ENCODE measurements at regions of chr2 and their contacts with region 1.

Region 1: GRCh38 chr2:20962939-20963557 is 80.8 kb downstream of the APOB start:
- DNase-seq: peak; percentile 49
- ATAC-seq: peak; percentile 73
- H3K4me3 Mint-ChIP-seq: no peak overlapping the region
- H3K27ac Mint-ChIP-seq: no peak overlapping the region
- H3K4me1 Mint-ChIP-seq: no peaks in the 10 kb centered on the region
- H3K27me3 Mint-ChIP-seq: peaks cover 19% of the 10 kb centered on the region
- CTCF ChIP-seq: peak; percentile 82

Region 2: GRCh38 chr2:19649785-19650380 is 1313.2 kb before region 1 on chr2:
- CTCF ChIA-PET with region 1: no interaction called
- POLR2A ChIA-PET with region 1: no interaction called
- intact Hi-C with region 1: no loop called
- DNase-seq: no peak
- ATAC-seq: no peak
- H3K4me3 Mint-ChIP-seq: no peak overlapping the region
- H3K27ac Mint-ChIP-seq: no peak overlapping the region
- H3K4me1 Mint-ChIP-seq: no peaks in the 10 kb centered on the region
- H3K27me3 Mint-ChIP-seq: no peaks in the 10 kb centered on the region
- CTCF ChIP-seq: no peak

Region 3: DNA sequence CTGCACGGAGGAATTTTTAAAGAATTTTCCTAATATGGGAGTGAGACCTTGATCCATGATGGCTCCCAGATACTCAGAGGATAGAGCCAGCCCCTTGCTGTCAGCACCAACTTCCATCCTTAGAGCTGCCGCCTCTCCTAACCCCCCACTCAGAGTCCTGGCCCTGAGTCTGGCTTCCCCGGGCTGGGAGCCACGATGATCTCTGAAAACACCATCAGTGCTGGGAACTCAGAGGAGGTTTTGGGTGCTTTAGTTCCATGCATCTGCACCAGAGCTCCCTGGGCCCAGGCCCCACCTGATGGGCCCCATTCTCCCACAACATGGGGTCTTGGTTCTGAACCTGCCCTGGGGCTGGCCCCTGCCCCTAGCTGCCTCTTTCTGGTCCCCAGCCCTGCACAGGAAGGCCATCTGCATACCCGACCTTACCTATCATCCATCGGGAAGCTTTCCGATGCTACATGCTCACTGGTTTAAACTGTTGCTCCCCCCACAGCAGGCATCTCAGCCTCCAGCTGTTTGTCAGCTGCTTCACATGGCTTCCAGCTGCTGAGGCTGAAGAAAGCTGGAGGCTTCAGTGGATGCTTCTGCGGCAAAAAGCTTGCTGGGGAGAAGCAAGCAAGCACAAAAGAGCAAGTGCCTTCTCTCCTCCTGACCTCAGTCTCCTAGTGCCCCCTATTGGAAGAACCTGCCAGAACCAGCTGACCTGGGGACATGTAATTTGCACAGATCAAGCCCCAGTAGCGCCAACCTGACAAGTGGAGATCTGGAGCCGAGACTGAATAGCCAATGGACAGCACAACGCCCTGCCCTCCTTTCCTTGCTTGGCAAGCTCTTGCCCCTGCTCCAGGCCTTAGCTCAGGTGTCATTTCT is 540.4 kb before region 1 on chr2:
- CTCF ChIA-PET with region 1: no interaction called
- POLR2A ChIA-PET with region 1: no interaction called
- intact Hi-C with region 1: no loop called
- DNase-seq: no peak
- ATAC-seq: no peak
- H3K4me3 Mint-ChIP-seq: no peak overlapping the region
- H3K27ac Mint-ChIP-seq: no peak overlapping the region
- H3K4me1 Mint-ChIP-seq: peaks cover 44% of the 10 kb centered on the region
- H3K27me3 Mint-ChIP-seq: no peaks in the 10 kb centered on the region
- CTCF ChIP-seq: no peak

Region 4: GRCh38 chr2:20666304-20667150 is 296.5 kb before region 1 on chr2 and contains the start of gene GDF7:
- CTCF ChIA-PET with region 1: interaction called, 251 read pairs
- POLR2A ChIA-PET with region 1: interaction called, 6 read pairs
- intact Hi-C with region 1: loop called (anchors 1 kb)
- DNase-seq: peak; percentile 67
- ATAC-seq: peak; percentile 78
- H3K4me3 Mint-ChIP-seq: peak within 1 kb of the TSS; percentile 87
- H3K27ac Mint-ChIP-seq: peak within 1 kb of the TSS; percentile 82
- H3K4me1 Mint-ChIP-seq: peaks cover 32% of the 10 kb centered on the region
- H3K27me3 Mint-ChIP-seq: peaks cover 8% of the 10 kb centered on the region
- CTCF ChIP-seq: no peak
- total RNA-seq, gene GDF7: 5.9 and 6.7 TPM in 2 replicates

Region 5: DNA sequence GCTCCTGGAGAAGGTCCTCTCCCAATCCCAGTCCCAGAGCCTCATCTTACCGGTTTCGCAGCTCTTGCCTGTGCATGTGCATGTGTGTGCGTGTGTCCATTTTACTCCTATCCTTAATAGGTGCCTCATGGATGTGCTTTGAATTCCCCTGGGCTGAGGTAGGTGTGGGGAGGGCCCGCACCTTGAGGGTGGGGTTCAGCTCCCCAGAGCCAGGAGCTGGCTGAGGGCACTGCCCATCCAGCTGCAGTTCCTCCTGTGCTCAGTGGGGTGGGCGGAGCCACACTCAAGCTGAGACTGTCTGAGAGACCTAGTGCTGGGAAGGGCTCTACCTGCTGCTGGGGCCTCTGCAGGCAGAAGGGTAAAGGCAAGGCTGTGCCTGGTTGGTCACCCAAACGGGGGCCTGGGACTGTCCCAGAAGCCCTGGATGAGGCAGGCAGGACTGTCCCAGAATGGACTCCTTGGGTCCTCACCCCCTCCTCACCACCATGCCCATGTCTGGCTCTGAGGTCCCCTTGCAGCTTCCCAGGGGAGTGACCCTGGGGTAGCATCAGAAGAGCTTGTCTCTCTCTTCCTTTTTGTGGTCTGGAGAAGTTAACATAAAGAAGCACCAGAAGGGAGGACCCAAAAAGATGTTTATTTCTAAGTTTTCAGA is 287.2 kb before region 1 on chr2:
- CTCF ChIA-PET with region 1: interaction called, 13 read pairs
- POLR2A ChIA-PET with region 1: no interaction called
- intact Hi-C with region 1: no loop called
- DNase-seq: peak; percentile 51
- ATAC-seq: peak; percentile 82
- H3K4me3 Mint-ChIP-seq: peak overlapping the region; percentile 64
- H3K27ac Mint-ChIP-seq: peak overlapping the region; percentile 94
- H3K4me1 Mint-ChIP-seq: peaks cover 73% of the 10 kb centered on the region
- H3K27me3 Mint-ChIP-seq: no peaks in the 10 kb centered on the region
- CTCF ChIP-seq: no peak

Region 6: GRCh38 chr2:20723543-20723942 is 239.5 kb before region 1 on chr2:
- CTCF ChIA-PET with region 1: interaction called, 6 read pairs
- POLR2A ChIA-PET with region 1: no interaction called
- intact Hi-C with region 1: loop called (anchors 2 kb)
- DNase-seq: no peak
- ATAC-seq: no peak
- H3K4me3 Mint-ChIP-seq: no peak overlapping the region
- H3K27ac Mint-ChIP-seq: no peak overlapping the region
- H3K4me1 Mint-ChIP-seq: no peaks in the 10 kb centered on the region
- H3K27me3 Mint-ChIP-seq: no peaks in the 10 kb centered on the region
- CTCF ChIP-seq: no peak

Region 7: GRCh38 chr2:20781656-20782265 is 181.3 kb before region 1 on chr2:
- CTCF ChIA-PET with region 1: interaction called, 20 read pairs
- POLR2A ChIA-PET with region 1: no interaction called
- intact Hi-C with region 1: loop called (anchors 1 kb)
- DNase-seq: no peak
- ATAC-seq: no peak
- H3K4me3 Mint-ChIP-seq: no peak overlapping the region
- H3K27ac Mint-ChIP-seq: no peak overlapping the region
- H3K4me1 Mint-ChIP-seq: no peaks in the 10 kb centered on the region
- H3K27me3 Mint-ChIP-seq: no peaks in the 10 kb centered on the region
- CTCF ChIP-seq: no peak

Region 8: GRCh38 chr2:20838016-20838415 is 125.0 kb before region 1 on chr2:
- CTCF ChIA-PET with region 1: no interaction called
- POLR2A ChIA-PET with region 1: no interaction called
- intact Hi-C with region 1: no loop called
- DNase-seq: no peak
- ATAC-seq: no peak
- H3K4me3 Mint-ChIP-seq: no peak overlapping the region
- H3K27ac Mint-ChIP-seq: no peak overlapping the region
- H3K4me1 Mint-ChIP-seq: no peaks in the 10 kb centered on the region
- H3K27me3 Mint-ChIP-seq: peaks cover 47% of the 10 kb centered on the region
- CTCF ChIP-seq: no peak

Measured in activated B cell treated with CpG ODN at 0.5 μM for 24 hours (primary cell).